ENCODE measurements at regions of chr5 and their contacts with region 1.

Region 1: GRCh38 chr5:59591162-59591561 is 302.4 kb downstream of the PDE4D start:
- DNase-seq: no peak
- H3K4me3 Mint-ChIP-seq: no peak overlapping the region
- H3K27ac Mint-ChIP-seq: no peak overlapping the region
- H3K4me1 Mint-ChIP-seq: peaks cover 11% of the 10 kb centered on the region
- H3K27me3 Mint-ChIP-seq: peaks cover 25% of the 10 kb centered on the region

Region 2: GRCh38 chr5:59483971-59484472 is 107.1 kb before region 1 on chr5:
- intact Hi-C with region 1: loop called (anchors 2 kb)
- DNase-seq: no peak
- H3K4me3 Mint-ChIP-seq: peak overlapping the region; percentile 1
- H3K27ac Mint-ChIP-seq: no peak overlapping the region
- H3K4me1 Mint-ChIP-seq: peaks cover 7% of the 10 kb centered on the region
- H3K27me3 Mint-ChIP-seq: peaks cover 6% of the 10 kb centered on the region

Region 3: GRCh38 chr5:59608745-59609144 is 17.6 kb after region 1 on chr5:
- intact Hi-C with region 1: loop called (anchors 1 kb)
- DNase-seq: peak; percentile 58
- H3K4me3 Mint-ChIP-seq: peak overlapping the region; percentile 1
- H3K27ac Mint-ChIP-seq: peak overlapping the region; percentile 23
- H3K4me1 Mint-ChIP-seq: peaks cover 15% of the 10 kb centered on the region
- H3K27me3 Mint-ChIP-seq: peaks cover 19% of the 10 kb centered on the region

Region 4: DNA sequence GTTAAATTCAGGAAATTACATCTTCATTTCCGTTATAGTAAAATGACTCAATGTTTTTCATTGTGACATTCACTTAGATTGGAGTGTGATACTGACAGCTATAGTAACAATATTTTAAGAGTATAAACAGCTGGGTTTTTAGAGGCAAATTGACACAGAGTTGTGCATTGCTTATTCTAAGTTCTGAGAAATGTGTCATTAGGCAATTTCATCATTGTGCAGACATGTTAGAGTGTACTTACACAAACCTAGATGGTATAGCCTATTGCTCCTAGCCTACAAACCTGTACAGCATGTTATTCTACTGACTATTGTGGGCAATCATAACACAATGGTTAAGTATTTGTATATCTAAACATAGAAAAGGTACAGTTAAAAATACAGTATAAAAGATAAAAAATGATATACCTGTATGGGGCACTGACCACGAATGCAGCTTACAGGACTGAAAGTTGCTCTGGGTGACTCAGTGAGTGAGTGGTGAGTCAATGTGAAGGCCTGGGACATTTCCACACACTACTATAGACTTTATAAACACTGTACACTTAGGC is 169.7 kb after region 1 on chr5:
- intact Hi-C with region 1: loop called (anchors 2 kb)
- DNase-seq: no peak
- H3K4me3 Mint-ChIP-seq: no peak overlapping the region
- H3K27ac Mint-ChIP-seq: no peak overlapping the region
- H3K4me1 Mint-ChIP-seq: peaks cover 5% of the 10 kb centered on the region
- H3K27me3 Mint-ChIP-seq: peaks cover 6% of the 10 kb centered on the region

Region 5: GRCh38 chr5:59893429-59894227 is 302.5 kb after region 1 on chr5 and contains the start of gene PDE4D:
- intact Hi-C with region 1: no loop called
- DNase-seq: peak; percentile 63
- H3K4me3 Mint-ChIP-seq: no peak within 1 kb of the TSS
- H3K27ac Mint-ChIP-seq: no peak within 1 kb of the TSS
- H3K4me1 Mint-ChIP-seq: no peaks in the 10 kb centered on the region
- H3K27me3 Mint-ChIP-seq: peaks cover 37% of the 10 kb centered on the region
- total RNA-seq, gene PDE4D: 47.7 and 50.1 TPM in 2 replicates

Measured in activated CD4-positive, alpha-beta T cell treated with anti-CD3 and anti-CD28 coated beads, Interleukin-2, amount 10 ng/mL, durations not matched to agents 24 days and 14 days (primary cell).